GM18951 (cell line): ENCODE measurements at regions of chr21 and their contacts with region 1.

Region 1: GRCh38 chr21:29372063-29372802 is 73.5 kb downstream of the BACH1 start:
- POLR2A ChIP-seq: no peak

Region 2: GRCh38 chr21:28975397-28975796 is 396.8 kb before region 1 on chr21:
- in situ Hi-C with region 1: no loop called
- POLR2A ChIP-seq: no peak

Region 3: DNA sequence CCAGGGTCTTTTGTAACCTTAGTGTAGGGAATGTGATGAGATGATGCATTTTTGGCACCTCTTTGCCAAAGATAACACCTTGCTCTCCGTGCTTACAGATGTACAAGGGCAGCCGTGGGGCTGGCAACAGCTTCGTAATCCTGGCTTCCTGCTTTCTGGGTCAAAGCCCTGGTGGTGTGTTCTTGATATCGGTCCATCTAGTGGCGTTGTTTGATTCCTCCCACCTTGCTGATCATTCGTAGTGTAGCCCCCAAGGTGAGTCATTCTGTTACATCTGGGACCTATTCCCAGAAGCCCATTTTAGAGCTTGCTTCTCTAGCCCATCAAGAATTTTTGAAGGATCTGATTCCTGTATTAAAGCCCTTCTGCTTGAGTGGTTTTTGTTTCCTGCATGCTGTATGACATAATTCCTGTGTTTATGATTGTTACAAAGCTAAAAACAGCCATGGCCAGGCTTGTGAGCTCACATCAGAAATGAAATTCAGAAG is 291.7 kb before region 1 on chr21:
- in situ Hi-C with region 1: loop called (anchors 5 kb)
- POLR2A ChIP-seq: no peak

Region 4: GRCh38 chr21:29164325-29164942 is 207.8 kb before region 1 on chr21:
- in situ Hi-C with region 1: loop called (anchors 10 kb)
- POLR2A ChIP-seq: no peak